ENCODE measurements at regions of chr16 and their contacts with region 1.

Region 1: GRCh38 chr16:85986931-85987749 is 88.2 kb downstream of the IRF8 start:
- DNase-seq: peak; percentile 76
- ATAC-seq: peak; percentile 16
- H3K4me3 Mint-ChIP-seq: no peak overlapping the region
- H3K27ac Mint-ChIP-seq: peak overlapping the region; percentile 99
- H3K4me1 Mint-ChIP-seq: peaks cover 78% of the 10 kb centered on the region
- H3K27me3 Mint-ChIP-seq: no peaks in the 10 kb centered on the region

Region 2: GRCh38 chr16:85610508-85611332 is 376.4 kb before region 1 on chr16:
- CTCF ChIA-PET with region 1: no interaction called
- POLR2A ChIA-PET with region 1: no interaction called
- intact Hi-C with region 1: no loop called
- DNase-seq: peak; percentile 94
- ATAC-seq: peak; percentile 72
- H3K4me3 Mint-ChIP-seq: peak overlapping the region; percentile 59
- H3K27ac Mint-ChIP-seq: no peak overlapping the region
- H3K4me1 Mint-ChIP-seq: peaks cover 27% of the 10 kb centered on the region
- H3K27me3 Mint-ChIP-seq: peaks cover 9% of the 10 kb centered on the region

Region 3: GRCh38 chr16:85888405-85889331 is 98.5 kb before region 1 on chr16:
- CTCF ChIA-PET with region 1: interaction called, 3 read pairs
- POLR2A ChIA-PET with region 1: no interaction called
- intact Hi-C with region 1: loop called (anchors 2 kb)
- DNase-seq: peak; percentile 61
- ATAC-seq: peak; percentile 92
- H3K4me3 Mint-ChIP-seq: peak overlapping the region; percentile 7
- H3K27ac Mint-ChIP-seq: peak overlapping the region; percentile 77
- H3K4me1 Mint-ChIP-seq: peaks cover 39% of the 10 kb centered on the region
- H3K27me3 Mint-ChIP-seq: peaks cover 31% of the 10 kb centered on the region

Region 4: DNA sequence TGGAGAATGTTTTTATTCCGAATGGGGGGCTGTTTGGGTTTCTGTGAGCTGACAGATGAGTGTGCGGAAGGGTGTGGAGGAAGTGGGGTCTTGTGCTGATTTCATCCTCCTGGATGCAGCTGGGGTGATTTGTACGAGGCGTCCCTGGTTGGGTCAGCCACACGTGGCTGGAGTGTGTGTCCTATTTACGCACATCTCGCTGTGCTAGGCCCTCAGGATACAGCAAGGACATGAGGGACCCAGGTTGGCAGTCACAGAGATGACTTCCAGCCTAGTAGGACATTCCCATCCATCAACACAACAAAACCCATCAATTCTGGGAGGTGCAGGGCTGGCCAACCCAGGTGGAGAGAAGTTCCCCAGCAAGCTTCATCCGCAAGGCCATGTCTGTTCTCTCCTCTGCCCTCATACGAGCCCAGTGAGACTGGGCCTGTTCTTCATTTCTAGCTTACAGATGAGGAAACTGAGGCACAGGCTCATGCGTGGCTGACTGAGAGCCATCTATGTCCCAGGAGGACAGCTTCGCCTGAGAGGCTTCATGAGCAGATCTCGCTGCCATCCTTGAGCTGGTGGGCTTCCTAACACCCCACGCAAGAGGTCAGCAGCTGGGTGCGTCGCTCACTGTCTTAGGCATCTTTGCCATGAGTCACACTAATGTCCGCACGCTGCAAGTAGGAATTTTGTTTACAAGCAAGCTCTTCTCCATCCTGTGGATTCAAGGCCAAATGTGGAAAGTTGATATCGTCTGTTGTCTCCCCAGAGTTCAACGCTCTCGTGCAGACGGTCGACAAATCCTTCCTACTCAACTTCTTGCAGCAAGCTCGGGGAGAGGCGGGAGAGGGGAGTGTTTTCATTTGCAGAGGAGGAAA is 63.8 kb before region 1 on chr16:
- CTCF ChIA-PET with region 1: interaction called, 6 read pairs
- POLR2A ChIA-PET with region 1: interaction called, 3 read pairs
- intact Hi-C with region 1: loop called in 1 of 2 experiments (anchors 1 kb)
- DNase-seq: peak; percentile 26
- ATAC-seq: peak; percentile 12
- H3K4me3 Mint-ChIP-seq: no peak overlapping the region
- H3K27ac Mint-ChIP-seq: peak overlapping the region; percentile 58
- H3K4me1 Mint-ChIP-seq: peaks cover 39% of the 10 kb centered on the region
- H3K27me3 Mint-ChIP-seq: peaks cover 6% of the 10 kb centered on the region

Region 5: GRCh38 chr16:85947230-85948137 is 39.7 kb before region 1 on chr16:
- CTCF ChIA-PET with region 1: interaction called, 14 read pairs
- POLR2A ChIA-PET with region 1: no interaction called
- intact Hi-C with region 1: loop called (anchors 1 to 2 kb)
- DNase-seq: peak; percentile 80
- ATAC-seq: peak; percentile 90
- H3K4me3 Mint-ChIP-seq: peak overlapping the region; percentile 29
- H3K27ac Mint-ChIP-seq: peak overlapping the region; percentile 58
- H3K4me1 Mint-ChIP-seq: peaks cover 72% of the 10 kb centered on the region
- H3K27me3 Mint-ChIP-seq: peaks cover 9% of the 10 kb centered on the region

Region 6: DNA sequence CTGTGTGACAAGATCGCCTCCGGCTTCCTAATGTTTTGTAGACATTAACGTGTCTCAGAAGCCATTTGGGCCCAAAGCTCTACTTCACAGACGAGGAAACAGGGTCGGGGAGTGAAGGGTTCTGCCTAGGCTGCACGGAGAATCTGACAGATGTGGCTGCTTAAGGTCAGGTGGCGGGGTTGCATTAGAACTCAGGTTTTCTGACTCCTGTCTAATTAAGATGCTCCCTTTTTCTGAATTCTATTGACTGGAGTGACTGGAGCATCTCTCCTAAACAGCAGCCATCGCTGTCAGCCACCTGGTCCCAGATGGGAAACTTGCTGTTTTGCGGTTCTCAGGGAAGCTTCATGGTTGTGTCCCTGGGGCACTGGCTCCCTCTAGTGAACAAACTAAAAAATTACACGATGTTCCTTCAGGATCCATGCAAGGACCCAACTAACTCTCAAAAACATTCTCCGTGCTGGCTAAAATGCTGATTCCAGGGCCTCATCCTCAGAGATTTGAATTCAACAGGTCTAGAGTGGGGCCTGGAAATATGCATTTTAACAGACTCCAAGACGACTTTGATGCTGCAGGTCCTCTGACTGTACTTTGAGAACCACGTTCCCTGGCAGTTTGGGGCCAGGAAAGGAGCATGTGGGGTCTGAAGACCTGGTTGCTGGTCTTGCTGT is 29.2 kb after region 1 on chr16:
- CTCF ChIA-PET with region 1: interaction called, 7 read pairs
- POLR2A ChIA-PET with region 1: no interaction called
- intact Hi-C with region 1: loop called (anchors 1 to 2 kb)
- DNase-seq: peak; percentile 64
- ATAC-seq: peak; percentile 75
- H3K4me3 Mint-ChIP-seq: no peak overlapping the region
- H3K27ac Mint-ChIP-seq: no peak overlapping the region
- H3K4me1 Mint-ChIP-seq: peaks cover 20% of the 10 kb centered on the region
- H3K27me3 Mint-ChIP-seq: peaks cover 34% of the 10 kb centered on the region

Region 7: DNA sequence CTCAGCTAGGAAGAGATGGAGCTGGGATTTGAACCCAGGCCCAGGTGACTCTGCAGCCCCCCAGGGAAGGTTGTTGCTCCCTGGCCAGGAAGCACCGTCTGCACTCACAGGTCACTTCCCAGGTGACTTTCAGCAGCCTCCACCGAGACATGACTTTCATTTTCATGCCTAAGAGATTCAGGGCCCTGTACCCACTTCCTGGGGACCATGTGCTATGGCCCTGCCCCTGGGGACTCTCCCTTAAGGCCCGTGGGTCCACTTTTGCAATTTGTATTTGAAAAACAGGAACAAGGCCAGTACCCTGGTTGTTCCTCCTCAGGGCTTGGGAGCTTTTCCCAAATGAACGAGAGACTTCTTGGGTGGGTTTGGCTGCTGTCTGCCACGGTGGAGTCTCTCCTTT is 102.9 kb after region 1 on chr16:
- CTCF ChIA-PET with region 1: no interaction called
- POLR2A ChIA-PET with region 1: no interaction called
- intact Hi-C with region 1: no loop called
- DNase-seq: no peak
- ATAC-seq: no peak
- H3K4me3 Mint-ChIP-seq: no peak overlapping the region
- H3K27ac Mint-ChIP-seq: no peak overlapping the region
- H3K4me1 Mint-ChIP-seq: peaks cover 7% of the 10 kb centered on the region
- H3K27me3 Mint-ChIP-seq: no peaks in the 10 kb centered on the region

Region 8: DNA sequence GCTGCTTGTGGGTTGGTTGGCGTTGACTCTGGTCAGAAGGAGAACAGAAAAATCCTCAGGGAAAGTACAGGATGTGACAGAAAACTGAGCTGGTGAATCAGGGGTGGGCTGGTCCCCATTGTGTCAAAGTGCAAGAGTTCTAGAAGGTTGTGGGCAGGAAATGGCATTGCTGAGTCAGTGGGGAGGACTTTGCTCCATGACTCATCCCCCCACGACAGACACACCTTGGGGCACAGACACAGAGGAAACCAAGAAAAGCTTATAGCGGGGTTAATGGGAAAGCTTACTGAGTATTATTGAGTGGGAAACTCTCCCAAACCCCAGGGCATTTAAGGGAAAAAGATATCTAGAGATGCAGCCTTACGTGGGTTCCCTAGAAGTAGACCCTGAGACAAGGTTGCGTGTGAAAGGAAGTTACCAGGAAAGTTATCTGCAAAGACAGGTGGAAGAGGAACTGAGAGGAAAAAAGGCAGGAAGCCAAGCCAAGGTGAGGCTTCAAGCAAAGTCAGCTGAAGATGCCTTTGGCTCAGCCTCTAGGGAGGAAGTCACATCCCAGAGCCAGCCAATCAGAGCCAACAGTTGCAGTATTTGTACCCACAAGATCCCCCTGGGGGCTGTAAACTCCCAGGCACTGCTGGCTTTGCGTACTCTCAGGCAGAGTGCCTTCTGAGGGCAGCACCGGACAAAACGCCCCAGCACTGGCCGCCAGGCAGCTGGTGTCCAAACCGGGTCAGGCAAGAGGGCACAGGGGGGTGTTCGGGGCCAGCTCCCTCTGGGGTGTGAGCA is 677.6 kb after region 1 on chr16:
- CTCF ChIA-PET with region 1: no interaction called
- POLR2A ChIA-PET with region 1: interaction called, 3 read pairs
- intact Hi-C with region 1: loop called in 1 of 2 experiments (anchors 1 kb)
- DNase-seq: peak; percentile 85
- ATAC-seq: peak; percentile 95
- H3K4me3 Mint-ChIP-seq: peak overlapping the region; percentile 21
- H3K27ac Mint-ChIP-seq: peak overlapping the region; percentile 83
- H3K4me1 Mint-ChIP-seq: peaks cover 28% of the 10 kb centered on the region
- H3K27me3 Mint-ChIP-seq: peaks cover 31% of the 10 kb centered on the region